Cardiac septum (tissue), 1 donor: ENCODE measurements at regions of chr1 and their contacts with region 1.

Region 1: GRCh38 chr1:201013991-201014815 is 9.3 kb downstream of the KIF21B start:
- DNase-seq: no peak

Region 2: DNA sequence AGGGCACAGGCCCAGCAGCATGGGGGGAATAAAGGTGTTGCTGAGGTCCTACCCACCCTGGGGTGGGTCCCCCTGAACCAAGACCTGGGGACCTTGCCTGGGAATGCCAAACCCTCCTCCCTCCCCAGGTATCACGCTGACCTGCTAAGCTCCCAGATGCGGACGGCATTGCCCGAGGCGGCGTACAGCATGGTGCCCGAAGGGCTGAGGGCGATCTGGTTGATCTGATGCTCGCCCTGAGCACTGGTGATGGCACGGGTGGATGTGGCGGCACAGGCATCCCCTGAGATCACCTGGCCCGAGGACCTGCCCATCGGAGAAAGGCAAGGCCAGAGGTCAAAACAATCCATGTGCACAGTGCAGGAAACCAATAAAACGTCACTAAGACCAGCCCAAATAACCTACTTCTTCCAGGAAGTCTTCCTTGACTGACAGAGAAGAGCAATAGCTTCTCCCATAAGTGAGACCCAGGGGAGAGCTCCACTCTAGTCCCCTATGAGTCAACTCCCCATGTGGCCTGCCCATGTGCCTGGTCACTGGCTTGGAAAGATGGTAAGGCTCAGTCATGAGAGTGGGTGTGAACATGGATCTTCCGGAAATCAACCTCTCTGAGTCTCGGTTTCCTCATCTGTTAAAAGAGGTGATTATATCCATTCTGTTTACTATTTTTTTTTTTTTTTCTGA is 37.0 kb before region 1 on chr1:
- intact Hi-C with region 1: loop called (anchors 2 kb)
- DNase-seq: no peak